MCF 10A (cell line): ENCODE measurements at regions of chr14 and their contacts with region 1.

Region 1: DNA sequence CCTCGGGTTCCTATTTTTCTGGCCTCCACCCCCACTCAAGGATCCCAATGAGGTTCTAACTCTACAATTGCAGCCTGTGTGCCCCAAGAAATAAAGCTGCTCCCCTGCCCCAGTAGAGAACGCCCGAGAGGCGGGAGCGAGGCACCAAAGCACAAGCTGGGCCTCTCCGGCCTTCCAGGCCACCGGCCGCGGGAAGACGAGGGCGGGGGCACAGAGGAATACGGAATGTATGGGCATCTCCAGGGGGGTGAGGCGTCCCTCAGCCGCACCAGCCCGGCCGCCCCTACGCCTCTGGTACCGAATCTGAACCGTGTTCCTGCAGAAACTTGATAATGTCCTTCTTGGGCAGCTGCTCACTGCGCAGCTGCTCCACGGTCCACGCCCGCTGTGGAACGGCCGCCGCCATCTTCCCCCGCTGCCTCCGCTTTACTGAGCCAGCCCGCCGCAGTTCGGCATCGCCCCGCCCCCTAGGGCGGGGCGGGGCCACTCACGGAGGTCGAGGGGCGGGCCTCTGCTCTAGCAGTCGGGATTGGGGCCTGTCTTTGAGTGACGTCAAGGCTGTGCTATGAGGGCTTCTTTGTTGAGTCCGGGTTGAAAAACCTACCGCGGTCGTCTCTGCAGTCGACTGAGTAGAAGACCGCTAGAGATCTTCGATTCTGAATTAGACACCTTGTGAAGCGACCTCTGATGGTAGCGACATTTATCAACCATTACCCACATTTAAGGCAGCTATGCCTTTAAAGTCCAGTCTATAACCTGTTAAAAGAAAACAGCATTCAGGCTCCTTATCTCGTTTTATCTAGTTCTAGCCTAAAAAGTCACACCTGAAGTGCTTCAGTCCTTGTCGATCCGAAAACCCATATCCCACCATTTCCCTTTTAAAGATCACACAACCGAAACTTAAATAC is at the start of gene FKBP3:
- DNase-seq: peak; percentile 99
- H3K4me3 Mint-ChIP-seq: peak within 1 kb of the TSS; percentile 100
- H3K27ac Mint-ChIP-seq: peak within 1 kb of the TSS; percentile 99
- H3K4me1 Mint-ChIP-seq: peaks cover 17% of the 10 kb centered on the region
- H3K27me3 Mint-ChIP-seq: no peaks in the 10 kb centered on the region
- CTCF ChIP-seq: no peak
- total RNA-seq, gene FKBP3: 61.7 and 62.0 TPM in 2 replicates

Region 2: GRCh38 chr14:44897045-44897844 is 237.1 kb before region 1 on chr14:
- CTCF ChIA-PET with region 1: no interaction called
- POLR2A ChIA-PET with region 1: interaction called, 10 read pairs
- intact Hi-C with region 1: no loop called
- DNase-seq: peak; percentile 95
- H3K4me3 Mint-ChIP-seq: peak overlapping the region; percentile 88
- H3K27ac Mint-ChIP-seq: peak overlapping the region; percentile 91
- H3K4me1 Mint-ChIP-seq: peaks cover 6% of the 10 kb centered on the region
- H3K27me3 Mint-ChIP-seq: no peaks in the 10 kb centered on the region
- CTCF ChIP-seq: no peak

Region 3: GRCh38 chr14:44955528-44955927 is 178.8 kb before region 1 on chr14:
- CTCF ChIA-PET with region 1: interaction called, 3 read pairs
- POLR2A ChIA-PET with region 1: interaction called, 105 read pairs
- intact Hi-C with region 1: no loop called
- DNase-seq: no peak
- H3K4me3 Mint-ChIP-seq: no peak overlapping the region
- H3K27ac Mint-ChIP-seq: no peak overlapping the region
- H3K4me1 Mint-ChIP-seq: peaks cover 6% of the 10 kb centered on the region
- H3K27me3 Mint-ChIP-seq: no peaks in the 10 kb centered on the region
- CTCF ChIP-seq: no peak

Region 4: GRCh38 chr14:45083971-45084722 is 50.2 kb before region 1 on chr14 and contains the start of gene PRPF39:
- CTCF ChIA-PET with region 1: interaction called, 3 read pairs
- POLR2A ChIA-PET with region 1: interaction called, 69 read pairs
- intact Hi-C with region 1: loop called (anchors 2 kb)
- DNase-seq: peak; percentile 93
- H3K4me3 Mint-ChIP-seq: peak within 1 kb of the TSS; percentile 97
- H3K27ac Mint-ChIP-seq: peak within 1 kb of the TSS; percentile 94
- H3K4me1 Mint-ChIP-seq: peaks cover 36% of the 10 kb centered on the region
- H3K27me3 Mint-ChIP-seq: no peaks in the 10 kb centered on the region
- CTCF ChIP-seq: no peak
- total RNA-seq, gene PRPF39: 36.7 and 41.4 TPM in 2 replicates

Region 5: GRCh38 chr14:45112889-45113781 is 21.2 kb before region 1 on chr14:
- CTCF ChIA-PET with region 1: interaction called, 4 read pairs
- POLR2A ChIA-PET with region 1: interaction called, 22 read pairs
- intact Hi-C with region 1: no loop called
- DNase-seq: no peak
- H3K4me3 Mint-ChIP-seq: no peak overlapping the region
- H3K27ac Mint-ChIP-seq: peak overlapping the region; percentile 3
- H3K4me1 Mint-ChIP-seq: no peaks in the 10 kb centered on the region
- H3K27me3 Mint-ChIP-seq: no peaks in the 10 kb centered on the region
- CTCF ChIP-seq: no peak

Region 6: DNA sequence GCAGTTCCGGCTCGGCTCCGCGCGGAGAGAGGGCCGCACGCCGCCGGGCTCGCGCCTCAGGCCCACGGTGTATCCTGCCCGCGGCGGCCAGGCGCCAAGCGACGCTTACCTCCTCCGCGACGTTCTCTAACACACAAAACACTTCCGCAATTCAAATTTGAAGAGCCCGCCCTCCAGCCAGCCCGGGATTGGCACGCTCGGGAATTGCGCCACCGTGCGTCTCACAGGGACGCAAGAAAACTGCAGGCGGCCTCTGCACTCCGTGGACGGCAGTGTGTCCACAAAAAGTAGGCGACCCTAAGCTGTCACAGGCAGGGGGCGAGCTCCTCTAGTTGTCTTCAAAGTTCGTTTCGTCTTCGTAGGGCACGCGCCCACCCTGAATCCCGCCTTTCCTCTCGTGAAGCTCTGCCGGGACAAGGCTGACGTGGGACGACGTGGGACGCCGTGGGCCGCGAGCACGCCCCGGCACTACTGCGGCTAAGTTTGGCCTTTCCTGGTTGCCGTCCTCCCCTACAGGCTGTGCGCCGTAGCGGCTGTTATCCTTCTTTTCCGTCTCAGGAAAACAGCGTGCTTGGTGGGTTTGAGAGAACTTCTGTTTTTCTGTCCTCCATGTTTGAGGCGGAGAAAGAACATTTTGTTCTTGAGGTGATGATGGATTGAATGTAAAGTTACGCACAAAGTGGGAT is 118.9 kb after region 1 on chr14 and contains the start of gene MIS18BP1:
- CTCF ChIA-PET with region 1: interaction called, 8 read pairs
- POLR2A ChIA-PET with region 1: interaction called, 165 read pairs
- intact Hi-C with region 1: loop called (anchors 2 kb)
- DNase-seq: peak; percentile 97
- H3K4me3 Mint-ChIP-seq: peak within 1 kb of the TSS; percentile 88
- H3K27ac Mint-ChIP-seq: peak within 1 kb of the TSS; percentile 99
- H3K4me1 Mint-ChIP-seq: peaks cover 11% of the 10 kb centered on the region
- H3K27me3 Mint-ChIP-seq: no peaks in the 10 kb centered on the region
- CTCF ChIP-seq: peak; percentile 80
- total RNA-seq, gene MIS18BP1: 24.2 and 31.6 TPM in 2 replicates